Ascending aorta (tissue), 2 donors: ENCODE measurements at regions of chr17 and their contacts with region 1.

Region 1: GRCh38 chr17:12730931-12731521 is 58.3 kb upstream of the ARHGAP44 start:
- DNase-seq: peak; percentile 77 to 96
- H3K4me3 ChIP-seq: no peak overlapping the region
- H3K27ac ChIP-seq: peak overlapping the region; percentile 81 to 91
- H3K4me1 ChIP-seq: peaks cover 0 to 35% of the 10 kb centered on the region in 2 donors
- H3K27me3 ChIP-seq: no peaks in the 10 kb centered on the region
- CTCF ChIP-seq: no peak

Region 2: DNA sequence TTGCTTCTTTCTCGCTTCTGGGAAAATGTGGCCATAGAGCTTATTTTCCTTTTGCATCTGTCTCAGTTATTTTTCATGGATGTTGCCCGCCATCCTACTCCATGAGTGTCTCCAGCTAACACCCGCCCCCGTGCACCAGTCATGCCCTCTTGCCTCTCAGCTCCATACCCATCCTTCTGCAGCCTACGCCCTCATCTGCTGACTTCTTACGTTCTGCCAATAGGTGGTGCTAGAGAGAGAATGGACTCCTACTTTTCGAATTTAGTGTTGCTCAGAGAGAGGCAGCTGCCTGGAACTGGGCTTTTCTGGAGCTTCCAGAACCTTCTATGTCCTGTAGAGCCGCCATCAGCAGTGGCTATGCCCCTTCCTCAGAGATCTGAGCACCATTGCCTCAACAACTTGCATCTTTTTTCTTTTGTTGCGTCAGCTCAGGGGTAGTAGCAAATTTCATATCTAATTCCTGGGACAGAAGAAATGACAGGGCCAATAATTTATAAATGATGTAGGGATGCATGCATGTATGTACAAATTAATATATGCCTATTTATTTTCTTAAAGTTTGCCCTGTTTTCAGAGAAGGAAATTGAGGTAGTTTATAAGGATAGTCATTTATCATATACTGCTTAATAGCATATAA is 185.0 kb before region 1 on chr17:
- intact Hi-C with region 1: loop called (anchors 5 kb)
- DNase-seq: no peak
- H3K4me3 ChIP-seq: no peak overlapping the region
- H3K27ac ChIP-seq: no peak overlapping the region
- H3K4me1 ChIP-seq: peaks cover 0 to 5% of the 10 kb centered on the region in 2 donors
- H3K27me3 ChIP-seq: no peaks in the 10 kb centered on the region
- CTCF ChIP-seq: peak; percentile 59 to 84 (median 78)